PC-9 (cell line): ENCODE measurements at regions of chr5 and their contacts with region 1.

Region 1: GRCh38 chr5:8560776-8561175 is 691.8 kb downstream of the MTRR start:
- DNase-seq: no peak
- H3K4me3 ChIP-seq: no peak overlapping the region
- H3K27ac ChIP-seq: no peak overlapping the region
- H3K4me1 ChIP-seq: no peaks in the 10 kb centered on the region
- H3K27me3 ChIP-seq: peaks cover 9% of the 10 kb centered on the region; the same call in 1 of the 2 replicates
- CTCF ChIP-seq: no peak

Region 2: DNA sequence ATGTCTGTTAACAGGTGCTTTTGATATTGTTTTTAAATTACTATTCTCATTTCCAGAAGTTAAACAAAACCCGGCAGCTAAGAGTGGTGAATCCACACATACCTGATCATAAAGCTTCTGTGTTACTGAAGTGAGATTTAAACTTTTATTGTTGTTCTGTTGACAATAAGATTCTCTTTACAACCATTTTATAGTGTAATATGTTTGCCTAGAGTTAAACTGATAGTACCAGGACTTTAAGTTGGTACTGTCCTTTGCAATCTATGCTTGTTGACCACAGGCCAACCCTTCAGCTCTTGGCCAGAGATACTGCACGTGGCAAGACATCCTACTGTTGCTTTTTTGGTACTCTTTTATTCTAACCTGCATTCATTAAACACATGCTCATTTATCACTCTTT is 114.4 kb after region 1 on chr5:
- CTCF ChIA-PET with region 1: no interaction called
- POLR2A ChIA-PET with region 1: interaction called, 12 read pairs
- intact Hi-C with region 1: no loop called
- DNase-seq: no peak
- H3K4me3 ChIP-seq: no peak overlapping the region
- H3K27ac ChIP-seq: no peak overlapping the region
- H3K4me1 ChIP-seq: no peaks in the 10 kb centered on the region
- H3K27me3 ChIP-seq: no peaks in the 10 kb centered on the region
- CTCF ChIP-seq: no peak